Motor neuron (in vitro differentiated cells): ENCODE measurements at regions of chr13 and their contacts with region 1.

Region 1: DNA sequence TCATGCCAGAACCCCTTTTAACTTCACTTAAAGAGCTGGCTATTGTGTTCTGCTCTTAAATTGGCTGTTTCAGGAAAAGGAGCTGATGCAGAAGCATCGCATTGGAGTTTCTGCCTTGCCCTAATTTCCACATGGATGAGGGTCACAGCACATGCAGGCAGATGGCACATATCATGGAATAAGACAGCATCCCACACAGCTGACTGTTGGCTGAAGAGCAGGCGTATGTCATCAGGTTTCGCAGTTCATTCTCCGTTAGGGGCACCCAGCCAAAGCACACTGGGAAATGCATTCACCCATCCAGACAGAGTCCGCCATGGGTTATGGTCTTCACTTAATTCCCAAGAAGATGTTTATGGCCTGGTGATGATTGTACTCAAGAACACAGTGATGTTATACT is 572.5 kb downstream of the LIG4 start:
- ATAC-seq: peak in 1 of 8 experiments; percentile 46
- H3K4me3 ChIP-seq: no peak overlapping the region
- H3K27ac ChIP-seq: no peak overlapping the region
- H3K4me1 ChIP-seq: no peaks in the 10 kb centered on the region

Region 2: DNA sequence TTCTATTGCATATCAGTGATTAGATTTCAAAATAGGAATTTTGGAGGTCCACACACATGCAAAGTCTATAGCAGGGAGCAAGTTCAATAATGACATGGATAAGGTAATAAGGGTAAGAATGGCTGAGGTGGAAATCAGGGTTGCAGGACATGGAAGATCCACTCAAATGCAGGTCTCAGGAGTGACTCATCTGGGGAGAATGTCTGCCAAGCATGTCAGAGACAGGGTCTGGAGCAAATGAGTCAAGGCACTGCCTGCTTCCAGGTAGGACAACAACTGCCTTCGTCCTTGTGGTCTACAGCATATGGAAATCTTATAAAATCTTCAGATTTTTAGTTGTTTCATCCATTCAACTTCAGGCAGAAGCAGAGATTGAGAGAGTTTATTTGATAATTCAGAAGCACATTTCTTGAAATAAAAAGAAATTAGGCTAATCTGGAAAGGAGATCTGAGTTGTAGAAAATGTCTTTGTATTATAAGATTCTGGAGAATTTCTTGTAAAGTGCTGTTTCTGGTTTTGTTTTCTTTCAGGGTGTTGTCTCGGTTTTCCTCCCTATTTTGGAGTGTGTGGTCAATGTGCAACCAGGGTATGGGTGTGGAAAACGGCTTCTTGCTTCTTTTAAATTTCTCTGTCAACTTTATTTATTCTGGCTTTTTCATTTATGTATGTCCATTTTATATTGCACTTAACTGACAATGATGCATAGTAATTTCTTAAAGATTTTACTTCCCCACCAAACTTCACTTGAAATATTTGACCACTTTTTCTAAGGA is 176.3 kb before region 1 on chr13:
- in situ Hi-C with region 1: no loop called
- ATAC-seq: peak in 3 of 8 experiments; percentile 63 to 82 (median 78)
- H3K4me3 ChIP-seq: no peak overlapping the region
- H3K27ac ChIP-seq: no peak overlapping the region
- H3K4me1 ChIP-seq: no peaks in the 10 kb centered on the region

Region 3: GRCh38 chr13:107743983-107744382 is 101.2 kb after region 1 on chr13:
- in situ Hi-C with region 1: loop called in 1 of 9 experiments (anchors 25 kb)
- ATAC-seq: peak in 1 of 8 experiments; percentile 75
- H3K4me3 ChIP-seq: no peak overlapping the region
- H3K27ac ChIP-seq: no peak overlapping the region
- H3K4me1 ChIP-seq: peaks cover 3 to 4% of the 10 kb centered on the region in 2 donors

Region 4: DNA sequence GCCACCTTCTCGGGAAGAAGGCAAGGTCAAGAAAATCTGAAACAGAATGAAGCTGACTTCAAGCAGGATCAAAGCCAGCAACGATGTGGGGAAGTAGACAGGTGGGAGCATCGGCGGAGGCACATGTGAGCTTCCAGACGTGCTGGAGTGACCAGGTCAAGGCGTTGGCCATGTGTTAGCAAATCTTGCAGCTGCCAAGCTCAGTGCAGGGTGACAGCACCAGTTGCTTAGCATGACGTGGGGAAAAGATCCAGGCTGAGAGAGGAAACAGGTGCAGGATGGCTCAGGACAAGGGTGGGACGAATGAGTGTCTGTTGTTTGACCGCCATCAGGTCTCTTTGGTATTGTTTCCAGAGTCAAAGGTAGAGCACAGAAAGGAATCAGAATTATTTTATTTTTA is 718.9 kb after region 1 on chr13:
- in situ Hi-C with region 1: no loop called
- ATAC-seq: no peak
- H3K4me3 ChIP-seq: no peak overlapping the region
- H3K27ac ChIP-seq: no peak overlapping the region
- H3K4me1 ChIP-seq: no peaks in the 10 kb centered on the region

Region 5: GRCh38 chr13:108463340-108463739 is 820.5 kb after region 1 on chr13:
- in situ Hi-C with region 1: no loop called
- ATAC-seq: peak in 6 of 8 experiments; percentile 88 to 99 (median 98)
- H3K4me3 ChIP-seq: no peak overlapping the region
- H3K27ac ChIP-seq: no peak overlapping the region
- H3K4me1 ChIP-seq: peaks cover 2 to 5% of the 10 kb centered on the region in 2 donors